Activated T-helper 1 cell treated with anti-CD3 and anti-CD28 coated beads, Interleukin-12 subunit alpha, Interleukin-12 subunit beta, Interleukin-2, Interleukin-4 antibody, amounts not matched to agents 30 ng/mL and 10 ng/mL and 1 ng/mL, durations not matched to agents 14 hours and 24 hours and 36 hours (primary cell): ENCODE measurements at regions of chr19 and their contacts with region 1.

Region 1: DNA sequence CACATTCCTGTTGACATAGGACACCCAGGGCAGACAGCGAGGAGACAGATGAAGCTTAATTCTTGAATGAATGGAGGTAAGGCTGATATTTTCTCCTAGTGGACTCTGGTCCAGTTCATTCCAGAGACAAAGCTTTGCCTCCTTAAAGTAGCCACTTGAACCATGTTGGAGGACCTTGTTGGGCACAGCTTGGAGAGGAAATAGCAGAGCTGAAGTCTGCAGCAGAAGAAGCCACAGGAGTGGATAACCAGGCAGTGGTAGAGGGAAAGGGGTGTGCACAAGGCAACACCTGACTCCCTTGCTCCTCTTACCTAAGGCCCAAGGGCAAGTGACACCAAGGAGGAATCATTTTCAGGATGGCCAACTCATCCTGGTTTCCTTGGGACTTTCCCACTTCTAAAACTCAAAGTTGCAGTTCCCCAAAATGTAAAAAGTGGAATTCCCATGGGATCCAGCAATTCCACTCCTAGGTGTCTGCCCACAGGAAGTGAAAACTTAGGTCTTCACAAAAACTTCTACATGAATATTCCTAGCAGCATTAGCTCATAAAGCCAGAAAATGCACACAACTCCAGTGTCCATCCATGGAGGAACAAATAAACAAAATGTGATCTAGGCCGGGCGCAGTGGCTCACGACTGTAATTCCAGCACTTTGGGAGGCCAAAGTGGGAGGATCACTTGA is 6.6 kb upstream of the RFX2 start:
- DNase-seq: no peak
- H3K4me3 Mint-ChIP-seq: no peak overlapping the region
- H3K27ac Mint-ChIP-seq: no peak overlapping the region
- H3K4me1 Mint-ChIP-seq: no peaks in the 10 kb centered on the region
- H3K27me3 Mint-ChIP-seq: peaks cover 9% of the 10 kb centered on the region

Region 2: GRCh38 chr19:6088602-6089049 is 28.3 kb before region 1 on chr19:
- intact Hi-C with region 1: loop called (anchors 2 kb)
- DNase-seq: no peak
- H3K4me3 Mint-ChIP-seq: no peak overlapping the region
- H3K27ac Mint-ChIP-seq: no peak overlapping the region
- H3K4me1 Mint-ChIP-seq: peaks cover 20% of the 10 kb centered on the region
- H3K27me3 Mint-ChIP-seq: peaks cover 9% of the 10 kb centered on the region

Region 3: GRCh38 chr19:6138066-6138465 is 21.2 kb after region 1 on chr19:
- intact Hi-C with region 1: no loop called
- DNase-seq: no peak
- H3K4me3 Mint-ChIP-seq: no peak overlapping the region
- H3K27ac Mint-ChIP-seq: no peak overlapping the region
- H3K4me1 Mint-ChIP-seq: no peaks in the 10 kb centered on the region
- H3K27me3 Mint-ChIP-seq: no peaks in the 10 kb centered on the region

Region 4: GRCh38 chr19:6164906-6165531 is 48.1 kb after region 1 on chr19:
- intact Hi-C with region 1: no loop called
- DNase-seq: no peak
- H3K4me3 Mint-ChIP-seq: no peak overlapping the region
- H3K27ac Mint-ChIP-seq: no peak overlapping the region
- H3K4me1 Mint-ChIP-seq: peaks cover 11% of the 10 kb centered on the region
- H3K27me3 Mint-ChIP-seq: peaks cover 2% of the 10 kb centered on the region

Region 5: DNA sequence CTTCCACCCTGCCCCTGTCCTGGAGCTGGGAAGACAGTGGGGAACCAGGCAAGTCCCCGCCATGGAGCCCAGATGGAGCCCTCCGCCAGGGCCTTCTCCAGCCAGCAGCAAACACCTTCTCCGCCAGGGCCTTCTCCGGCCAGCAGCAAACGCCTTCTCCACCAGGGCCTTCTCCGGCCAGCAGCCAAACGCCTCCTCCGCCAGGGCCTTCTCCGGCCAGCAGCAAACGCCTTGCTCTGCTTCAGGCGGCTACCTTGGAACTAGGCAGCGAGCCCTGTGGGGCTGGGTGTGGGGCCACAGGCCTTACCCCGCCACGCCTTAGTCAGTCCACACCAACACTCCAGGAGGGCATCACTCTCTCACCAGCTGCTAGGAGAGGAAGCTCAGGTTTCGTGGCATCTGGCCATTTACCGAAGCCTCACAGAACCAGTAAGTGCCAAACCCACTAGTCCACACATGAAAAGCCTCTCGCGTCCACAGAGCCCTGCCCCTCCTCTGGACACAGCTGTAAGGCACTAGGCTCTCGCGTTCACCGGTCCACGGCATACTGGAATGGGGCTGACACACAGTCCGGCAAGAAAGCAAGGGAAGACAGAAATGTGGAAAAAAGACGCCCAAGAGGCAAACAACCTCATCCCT is 121.9 kb after region 1 on chr19:
- intact Hi-C with region 1: no loop called
- DNase-seq: no peak
- H3K4me3 Mint-ChIP-seq: no peak overlapping the region
- H3K27ac Mint-ChIP-seq: no peak overlapping the region
- H3K4me1 Mint-ChIP-seq: peaks cover 12% of the 10 kb centered on the region
- H3K27me3 Mint-ChIP-seq: no peaks in the 10 kb centered on the region